ENCODE measurements at regions of chr13 and their contacts with region 1.

Region 1: GRCh38 chr13:52450012-52450792 is at the start of gene VPS36:
- DNase-seq: peak; percentile 59 to 91
- ATAC-seq: peak; percentile 85 to 89
- H3K4me3 ChIP-seq: peak within 1 kb of the TSS; percentile 83
- H3K27ac ChIP-seq: peak within 1 kb of the TSS; percentile 98 to 99
- H3K4me1 ChIP-seq: peaks cover 28% of the 10 kb centered on the region; the same call in 2 of the 3 replicates
- CTCF ChIP-seq: peak; percentile 93
- EP300 ChIP-seq: no peak
- POLR2A ChIP-seq: peak; percentile 63
- RAD21 ChIP-seq: peak; percentile 81 to 94
- polyA plus RNA-seq, gene VPS36: 23.1 and 26.7 TPM in 2 replicates

Region 2: GRCh38 chr13:52344108-52344507 is 106.1 kb before region 1 on chr13:
- CTCF ChIA-PET with region 1: interaction called, 115 read pairs
- POLR2A ChIA-PET with region 1: interaction called, 18 read pairs
- DNase-seq: no peak
- ATAC-seq: no peak
- H3K4me3 ChIP-seq: no peak overlapping the region
- H3K27ac ChIP-seq: no peak overlapping the region
- H3K4me1 ChIP-seq: peaks cover 6% of the 10 kb centered on the region; the same call in 2 of the 3 replicates
- CTCF ChIP-seq: no peak
- EP300 ChIP-seq: no peak
- POLR2A ChIP-seq: no peak
- RAD21 ChIP-seq: no peak

Region 3: GRCh38 chr13:52359534-52359933 is 90.7 kb before region 1 on chr13:
- CTCF ChIA-PET with region 1: interaction called, 12 read pairs
- POLR2A ChIA-PET with region 1: no interaction called
- DNase-seq: no peak
- ATAC-seq: no peak
- H3K4me3 ChIP-seq: no peak overlapping the region
- H3K27ac ChIP-seq: no peak overlapping the region
- H3K4me1 ChIP-seq: peaks cover 7% of the 10 kb centered on the region
- CTCF ChIP-seq: no peak
- EP300 ChIP-seq: no peak
- POLR2A ChIP-seq: no peak
- RAD21 ChIP-seq: no peak

Region 4: DNA sequence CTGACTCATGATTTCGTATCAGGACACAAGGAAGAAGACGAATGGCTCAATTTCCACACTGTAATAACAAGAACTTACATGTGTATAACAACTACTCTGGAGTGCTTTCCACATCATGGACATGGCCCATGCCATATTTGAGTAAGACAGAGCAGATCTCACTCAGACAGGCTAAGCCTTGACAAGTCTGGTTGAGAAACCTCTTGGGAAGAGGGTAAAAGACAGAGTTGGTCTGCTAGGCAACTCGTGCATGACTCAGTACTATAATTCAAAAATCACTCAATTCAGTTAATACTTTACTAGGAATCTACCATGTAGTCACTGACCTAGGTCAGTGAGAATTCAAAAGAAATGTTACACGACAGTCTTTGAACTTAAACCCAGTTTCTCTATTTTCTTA is 38.6 kb before region 1 on chr13:
- CTCF ChIA-PET with region 1: interaction called, 30 read pairs
- POLR2A ChIA-PET with region 1: interaction called, 3 read pairs
- DNase-seq: peak; percentile 55 to 79
- ATAC-seq: peak; percentile 96 to 98
- H3K4me3 ChIP-seq: no peak overlapping the region
- H3K27ac ChIP-seq: peak overlapping the region; percentile 82 to 93
- H3K4me1 ChIP-seq: peaks cover 61% of the 10 kb centered on the region
- CTCF ChIP-seq: no peak
- EP300 ChIP-seq: no peak
- POLR2A ChIP-seq: no peak
- RAD21 ChIP-seq: 0 out of 5 replicates have a peak, but pooled peaks of 1 of the 2 experiments have one; percentile 9

Region 5: DNA sequence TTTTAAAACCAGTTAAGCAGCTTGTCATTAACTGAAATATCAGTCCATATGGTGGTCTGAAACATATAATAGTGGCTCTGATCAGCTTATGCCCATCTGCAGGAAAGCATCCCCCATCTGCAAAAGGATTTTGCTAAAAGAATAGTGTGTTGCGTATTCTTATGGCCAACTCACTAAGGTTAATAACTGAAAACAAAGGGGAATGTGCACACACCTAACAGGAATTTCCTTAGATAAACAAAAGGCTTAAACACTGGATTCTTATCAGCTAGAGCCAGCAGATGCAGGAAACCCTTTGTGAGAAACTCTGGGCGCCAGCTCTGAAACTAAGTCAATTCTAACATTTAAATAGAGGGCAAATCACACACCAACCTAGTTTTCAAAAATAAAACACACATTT is 21.9 kb before region 1 on chr13:
- CTCF ChIA-PET with region 1: interaction called, 58 read pairs
- POLR2A ChIA-PET with region 1: interaction called, 10 read pairs
- DNase-seq: peak in 1 of 2 experiments; percentile 49
- ATAC-seq: peak in 1 of 2 experiments; percentile 69; a peak in 3 of 6 replicates
- H3K4me3 ChIP-seq: no peak overlapping the region
- H3K27ac ChIP-seq: peak overlapping the region; percentile 11 to 63; a peak in 4 of 6 replicates
- H3K4me1 ChIP-seq: peaks cover 18% of the 10 kb centered on the region
- CTCF ChIP-seq: no peak
- EP300 ChIP-seq: no peak
- POLR2A ChIP-seq: no peak
- RAD21 ChIP-seq: no peak